ENCODE measurements at regions of chr1 and their contacts with region 1.

Region 1: DNA sequence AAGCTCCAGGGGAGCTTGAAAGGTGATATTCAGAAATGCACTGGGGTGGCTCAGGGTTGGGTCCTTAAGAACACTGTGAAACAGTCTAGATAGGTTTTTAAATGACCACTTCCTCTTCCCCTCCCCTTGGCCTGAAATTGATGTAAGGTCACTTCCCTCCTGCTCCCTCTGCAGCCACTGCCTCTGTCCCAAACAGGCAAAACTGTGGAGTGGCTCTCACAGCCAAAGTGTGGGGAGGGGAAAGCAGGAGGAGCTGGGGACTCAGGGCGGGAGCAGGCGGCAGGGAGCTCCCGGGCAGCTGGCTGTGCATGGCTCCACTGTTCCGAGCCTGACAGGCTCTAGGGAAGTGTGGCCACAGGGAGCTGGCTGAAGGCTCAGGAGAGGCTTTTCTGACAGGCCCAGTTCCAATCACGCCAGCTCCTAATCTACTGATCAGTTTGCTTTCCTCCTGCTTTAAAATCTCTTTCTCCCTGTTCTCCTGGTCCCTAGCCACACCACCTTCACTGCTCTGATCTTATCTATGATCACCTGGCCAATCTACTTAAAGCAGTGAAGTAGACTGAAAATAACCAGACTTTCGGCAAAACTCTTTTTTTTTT is 5.1 kb upstream of the CSRP1 start:
- DNase-seq: no peak
- ATAC-seq: no peak
- H3K4me3 Mint-ChIP-seq: no peak overlapping the region
- H3K27ac Mint-ChIP-seq: no peak overlapping the region
- H3K4me1 Mint-ChIP-seq: peaks cover 41% of the 10 kb centered on the region
- H3K27me3 Mint-ChIP-seq: no peaks in the 10 kb centered on the region

Region 2: DNA sequence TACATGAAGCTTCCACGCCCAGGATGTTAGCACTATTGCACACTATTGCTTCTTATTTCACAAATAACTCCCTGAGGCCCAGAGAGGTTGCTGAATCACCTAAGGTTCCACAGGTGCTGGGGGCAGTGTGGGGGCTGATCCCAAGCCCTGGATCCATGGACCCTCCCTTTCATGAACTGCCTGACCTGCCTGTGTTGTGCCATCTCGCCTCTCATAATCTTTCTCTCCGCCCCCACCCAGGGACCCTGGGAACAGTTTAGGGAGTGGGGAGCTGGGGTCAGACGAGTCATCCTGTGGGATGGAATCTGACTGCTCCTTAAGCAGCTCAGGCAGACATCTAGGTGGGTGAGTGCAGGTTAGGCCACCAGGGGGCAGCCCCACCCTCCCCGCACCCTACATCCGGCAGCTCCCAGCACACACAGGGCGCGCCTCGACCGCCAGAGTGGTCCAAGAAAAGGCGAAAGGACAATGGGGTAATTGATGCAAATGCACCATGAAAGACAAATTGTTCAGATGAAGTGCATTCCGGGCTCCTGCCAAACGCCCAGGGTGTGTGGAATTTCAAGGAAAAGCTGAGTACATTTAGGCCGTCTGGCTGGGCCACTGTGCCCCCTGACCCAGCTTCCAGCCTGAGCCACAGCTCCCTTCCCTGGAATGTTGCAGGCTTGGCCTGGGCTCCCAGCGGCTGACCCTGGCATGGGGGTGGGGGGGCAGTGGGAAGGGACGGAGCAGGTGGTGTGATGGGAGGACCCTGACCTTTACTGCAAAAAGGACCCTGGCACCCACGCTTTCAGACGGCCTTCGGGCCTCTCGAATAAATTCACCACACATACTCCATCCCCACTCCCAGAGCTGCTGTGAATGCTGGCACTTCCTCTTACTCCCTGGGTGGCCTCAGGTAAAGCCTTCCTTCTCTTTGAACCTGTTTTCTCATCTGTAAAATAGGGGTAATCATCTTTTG is 63.8 kb before region 1 on chr1:
- CTCF ChIA-PET with region 1: interaction called, 176 read pairs
- POLR2A ChIA-PET with region 1: interaction called, 4 read pairs
- DNase-seq: peak; percentile 82
- ATAC-seq: peak; percentile 98
- H3K4me3 Mint-ChIP-seq: no peak overlapping the region
- H3K27ac Mint-ChIP-seq: no peak overlapping the region
- H3K4me1 Mint-ChIP-seq: peaks cover 19% of the 10 kb centered on the region
- H3K27me3 Mint-ChIP-seq: peaks cover 11% of the 10 kb centered on the region

Region 3: GRCh38 chr1:201481761-201482493 is 30.1 kb before region 1 on chr1:
- CTCF ChIA-PET with region 1: interaction called, 373 read pairs
- POLR2A ChIA-PET with region 1: interaction called, 17 read pairs
- DNase-seq: peak; percentile 88
- ATAC-seq: peak; percentile 83
- H3K4me3 Mint-ChIP-seq: peak overlapping the region; percentile 74
- H3K27ac Mint-ChIP-seq: no peak overlapping the region
- H3K4me1 Mint-ChIP-seq: peaks cover 35% of the 10 kb centered on the region
- H3K27me3 Mint-ChIP-seq: peaks cover 16% of the 10 kb centered on the region

Region 4: GRCh38 chr1:201495471-201496295 is 16.4 kb before region 1 on chr1:
- CTCF ChIA-PET with region 1: interaction called, 150 read pairs
- POLR2A ChIA-PET with region 1: interaction called, 8 read pairs
- DNase-seq: no peak
- ATAC-seq: no peak
- H3K4me3 Mint-ChIP-seq: no peak overlapping the region
- H3K27ac Mint-ChIP-seq: no peak overlapping the region
- H3K4me1 Mint-ChIP-seq: peaks cover 8% of the 10 kb centered on the region
- H3K27me3 Mint-ChIP-seq: no peaks in the 10 kb centered on the region

Region 5: DNA sequence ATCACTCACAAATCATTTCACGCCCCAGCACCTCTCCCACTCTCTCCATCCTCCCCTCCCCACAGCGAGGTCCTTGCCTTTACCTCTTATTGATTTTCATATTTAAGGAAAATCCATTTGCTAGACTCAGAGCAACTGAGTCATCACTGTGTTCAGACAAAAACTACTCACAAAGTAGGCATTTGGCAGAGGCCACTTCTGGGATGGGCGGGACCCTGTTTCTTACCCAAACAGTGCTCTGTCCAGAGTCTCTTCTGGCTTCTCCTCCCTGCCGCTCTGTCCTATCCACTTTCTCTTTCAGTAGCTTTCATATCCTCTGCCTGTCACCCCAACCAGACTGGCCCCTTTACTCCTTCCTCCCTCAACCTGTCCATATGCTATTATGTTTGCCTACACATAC is 24.5 kb after region 1 on chr1:
- CTCF ChIA-PET with region 1: interaction called, 17 read pairs
- POLR2A ChIA-PET with region 1: no interaction called
- DNase-seq: no peak
- ATAC-seq: no peak
- H3K4me3 Mint-ChIP-seq: no peak overlapping the region
- H3K27ac Mint-ChIP-seq: no peak overlapping the region
- H3K4me1 Mint-ChIP-seq: peaks cover 13% of the 10 kb centered on the region
- H3K27me3 Mint-ChIP-seq: peaks cover 53% of the 10 kb centered on the region

Region 6: GRCh38 chr1:202046227-202046801 is 534.3 kb after region 1 on chr1:
- CTCF ChIA-PET with region 1: no interaction called
- POLR2A ChIA-PET with region 1: no interaction called
- DNase-seq: no peak
- ATAC-seq: no peak
- H3K4me3 Mint-ChIP-seq: no peak overlapping the region
- H3K27ac Mint-ChIP-seq: no peak overlapping the region
- H3K4me1 Mint-ChIP-seq: peaks cover 5% of the 10 kb centered on the region
- H3K27me3 Mint-ChIP-seq: peaks cover 2% of the 10 kb centered on the region

Measured in activated CD8-positive, alpha-beta T cell treated with anti-CD3 and anti-CD28 coated beads, Interleukin-2, amount 10 ng/mL, durations not matched to agents 7 days and 5 days (primary cell).